ENCODE measurements at regions of chr7 and their contacts with region 1.

Region 1: DNA sequence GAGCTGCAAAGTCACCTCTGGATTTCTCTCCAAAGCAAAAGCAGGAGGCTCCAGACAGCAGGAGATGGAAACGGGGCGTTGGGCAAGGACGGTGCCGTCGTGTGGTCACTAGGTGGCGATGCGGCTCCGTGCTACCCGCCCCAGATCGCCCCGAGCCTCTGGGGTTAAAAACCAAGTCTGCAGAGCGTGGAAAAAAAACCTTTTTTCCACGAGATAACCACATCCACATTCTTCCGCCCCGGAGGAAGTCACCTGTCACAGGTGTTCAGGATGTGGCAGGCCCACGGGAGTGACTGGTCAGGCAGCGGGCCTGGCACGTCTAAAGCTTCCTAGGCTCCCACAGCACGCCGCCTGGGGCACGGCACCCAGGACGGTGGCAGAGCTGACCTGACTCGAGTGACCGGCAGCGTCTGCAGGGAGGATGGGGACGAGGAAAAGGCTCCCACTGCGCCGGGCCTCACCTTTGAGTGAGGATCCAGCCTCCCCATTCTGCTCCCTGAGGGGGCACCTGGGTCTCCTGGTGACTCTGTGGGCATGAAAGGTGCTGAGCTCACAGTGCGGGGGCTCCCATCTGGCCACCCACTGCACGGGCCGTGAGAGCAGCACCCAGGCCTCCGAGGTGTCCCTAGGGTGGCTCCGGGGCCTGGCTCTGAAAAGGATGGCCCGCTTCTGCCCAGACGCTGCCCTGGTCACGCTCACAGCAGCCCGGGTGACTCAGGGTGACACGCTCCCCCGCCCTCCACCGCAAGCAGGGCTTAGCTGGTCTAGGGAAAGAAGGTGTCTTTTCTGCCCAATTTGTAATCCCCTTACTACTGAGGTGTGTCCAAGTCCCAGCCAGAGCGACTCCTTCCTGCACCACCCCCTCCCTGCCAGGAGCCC is 71.3 kb upstream of the TNRC18 start:
- DNase-seq: peak; percentile 59 to 93
- H3K4me3 ChIP-seq: no peak overlapping the region
- CTCF ChIP-seq: peak in 1 of 3 donors; percentile 77
- POLR2A ChIP-seq: no peak

Region 2: DNA sequence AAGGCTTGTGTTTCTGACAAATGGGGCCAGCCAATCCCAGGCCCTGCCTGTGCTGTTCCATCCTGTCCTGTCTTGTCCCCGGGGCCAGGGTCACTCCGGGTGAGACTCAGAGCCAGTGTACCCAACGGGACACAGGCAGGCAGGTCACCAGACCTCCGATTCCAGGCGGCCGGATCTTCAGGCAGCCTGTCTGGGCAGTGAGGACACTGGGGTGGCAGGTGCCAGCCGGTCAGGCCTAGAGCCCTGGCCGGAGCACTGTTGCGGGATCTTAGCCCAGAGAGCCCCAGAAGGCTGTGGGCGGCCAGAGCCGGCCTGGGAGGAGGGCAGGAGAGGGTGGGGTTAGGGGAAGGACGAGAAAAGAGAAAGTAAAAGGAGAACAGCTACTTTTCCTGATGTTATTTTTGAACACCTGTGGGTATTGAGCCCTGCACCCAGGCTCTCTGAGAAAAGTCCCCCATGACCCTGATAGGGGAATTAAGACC is 63.0 kb after region 1 on chr7:
- intact Hi-C with region 1: loop called (anchors 2 kb)
- DNase-seq: peak; percentile 39 to 93
- H3K4me3 ChIP-seq: no peak overlapping the region
- CTCF ChIP-seq: no peak
- POLR2A ChIP-seq: no peak

Region 3: GRCh38 chr7:5665094-5666025 is 170.4 kb after region 1 on chr7:
- intact Hi-C with region 1: loop called (anchors 10 kb)
- DNase-seq: peak; percentile 81 to 92
- H3K4me3 ChIP-seq: no peak overlapping the region
- CTCF ChIP-seq: peak in 1 of 3 donors; percentile 81
- POLR2A ChIP-seq: no peak

Measured in lower leg skin (tissue), 4 donors.